GM13976 (cell line): ENCODE measurements at regions of chr1 and their contacts with region 1.

Region 1: GRCh38 chr1:23188434-23188884 is 19.8 kb upstream of the LUZP1 start:
- DNase-seq: no peak
- CTCF ChIP-seq: no peak

Region 2: DNA sequence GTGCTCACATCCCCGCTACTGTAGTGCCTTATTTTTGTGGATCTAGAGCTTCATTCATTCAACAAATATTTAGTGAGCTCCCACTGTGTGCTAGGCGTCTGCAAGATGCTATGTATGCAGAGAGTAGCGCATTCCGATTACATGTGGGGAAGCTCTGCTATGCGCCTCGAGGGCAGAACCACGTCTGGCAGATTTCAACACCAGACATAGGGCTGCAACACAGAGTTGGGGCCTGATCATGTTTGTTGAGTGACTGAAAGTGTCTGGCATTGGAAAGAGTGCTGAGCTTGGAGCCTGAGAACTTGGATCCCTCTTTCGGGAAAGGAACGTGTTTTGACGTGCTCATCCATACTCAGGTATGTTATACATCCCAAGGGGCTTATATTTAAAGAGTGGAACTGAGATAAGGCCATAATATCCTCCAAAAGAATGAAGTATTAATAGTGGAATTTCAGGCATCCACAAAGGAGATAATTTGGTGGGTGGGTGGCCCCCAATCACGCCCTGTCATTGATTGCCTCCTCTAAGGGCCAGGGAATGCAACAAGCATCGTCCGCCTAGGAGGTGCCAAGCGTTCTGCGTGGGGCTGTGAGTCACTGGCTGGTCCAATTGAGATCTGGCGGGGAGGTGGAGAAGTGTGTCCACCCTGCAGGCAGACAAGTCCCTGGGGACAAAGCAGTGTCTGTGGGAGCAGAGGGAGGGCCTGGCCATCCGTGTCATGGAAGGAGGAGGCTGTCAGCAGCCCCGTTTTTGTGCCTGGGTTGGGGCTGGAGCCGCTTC is 799.6 kb before region 1 on chr1:
- in situ Hi-C with region 1: no loop called
- DNase-seq: no peak
- CTCF ChIP-seq: no peak

Region 3: GRCh38 chr1:23098463-23099170 is 89.8 kb before region 1 on chr1:
- in situ Hi-C with region 1: loop called (anchors 5 kb)
- DNase-seq: peak; percentile 63
- CTCF ChIP-seq: peak; percentile 77

Region 4: GRCh38 chr1:24266398-24266941 is 1078.0 kb after region 1 on chr1:
- in situ Hi-C with region 1: no loop called
- DNase-seq: no peak
- CTCF ChIP-seq: no peak